A549 (cell line): ENCODE measurements at regions of chr12 and their contacts with region 1.

Region 1: DNA sequence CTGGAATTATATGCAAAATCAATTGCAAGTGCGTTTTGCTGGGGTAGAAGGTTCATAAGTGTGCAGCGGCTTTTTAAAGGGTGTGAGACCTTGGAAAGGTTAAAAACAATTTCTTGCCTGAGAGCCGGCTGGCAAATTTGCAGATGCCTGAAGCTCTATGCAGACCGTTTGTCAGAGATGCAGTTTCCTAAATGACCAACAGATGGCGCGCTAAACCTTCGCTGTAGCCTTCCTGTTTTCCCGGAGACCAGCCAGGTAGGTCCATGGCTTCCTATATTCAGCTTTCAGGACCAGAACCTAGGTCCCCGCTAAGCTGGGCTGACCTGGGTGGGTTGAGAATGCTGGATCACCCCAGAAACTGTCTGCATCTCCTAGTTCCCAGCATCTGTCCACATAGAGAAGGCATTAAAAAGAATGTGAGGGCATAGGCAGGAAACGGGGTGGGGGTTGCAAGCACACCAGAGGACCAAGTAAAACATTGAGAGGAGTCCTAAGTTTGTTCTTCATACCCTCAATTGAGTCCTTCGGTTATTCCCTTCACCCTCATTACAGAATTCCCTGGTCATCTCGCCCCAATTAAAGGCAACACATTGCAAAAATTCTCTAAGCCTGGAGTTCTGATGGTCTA is 5.7 kb upstream of the NOS1 start:
- DNase-seq: peak; percentile 85 to 90
- ATAC-seq: peak; percentile 41 to 86; a peak in 4 of 6 replicates
- H3K4me3 ChIP-seq: no peak overlapping the region
- H3K27ac ChIP-seq: peak overlapping the region; percentile 13 to 36; a peak in 3 of 6 replicates
- H3K4me1 ChIP-seq: 0 out of 3 replicates have a peak, but pooled peaks cover 3% of the 10 kb centered on the region
- CTCF ChIP-seq: peak; percentile 96
- EP300 ChIP-seq: no peak
- POLR2A ChIP-seq: no peak
- RAD21 ChIP-seq: peak; percentile 98 to 99

Region 2: DNA sequence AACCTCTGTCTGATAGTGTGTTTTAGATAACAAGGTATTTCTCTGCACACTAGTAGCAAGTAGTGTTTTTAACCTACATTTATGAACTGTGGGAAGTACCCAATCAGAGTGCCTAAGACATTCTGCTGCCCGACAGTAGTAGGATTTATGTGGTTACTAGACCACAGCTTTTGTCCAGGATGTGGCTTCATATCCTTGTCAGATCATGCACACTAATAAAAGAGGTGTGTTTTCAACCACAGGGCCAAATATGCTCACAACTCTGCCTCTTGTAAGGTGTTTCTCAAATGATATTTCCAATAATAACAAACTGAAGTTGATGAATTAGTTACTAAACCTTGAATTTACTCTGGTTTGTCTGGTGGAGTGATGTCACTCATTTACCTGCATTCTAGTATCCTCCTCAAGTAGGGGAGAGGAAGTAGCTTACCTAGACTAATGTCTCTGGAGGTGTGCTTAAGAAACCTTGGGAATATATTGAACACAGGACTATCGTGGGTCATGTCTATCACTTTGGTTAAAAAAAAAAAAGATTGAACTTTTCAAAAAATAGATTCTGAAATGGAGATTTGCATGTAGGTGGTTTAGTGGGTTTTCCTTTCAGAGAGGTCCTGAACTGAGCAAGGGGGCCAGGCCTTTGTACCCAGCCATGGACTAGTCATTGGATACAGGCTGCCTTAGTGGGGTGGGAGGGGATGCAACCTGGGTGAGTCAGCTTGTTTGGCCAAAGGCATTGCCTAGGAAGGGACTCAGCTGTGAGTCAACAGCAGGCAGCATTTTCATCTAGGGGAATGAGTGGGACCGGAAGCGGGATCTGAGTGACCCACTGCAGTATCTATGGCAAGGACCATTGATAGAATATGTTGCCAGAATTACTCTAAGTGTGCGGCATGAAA is 442.3 kb before region 1 on chr12:
- CTCF ChIA-PET with region 1: no interaction called
- POLR2A ChIA-PET with region 1: no interaction called
- DNase-seq: peak in 1 of 2 experiments; percentile 24
- ATAC-seq: peak; percentile 66 to 75; a peak in 4 of 6 replicates
- H3K4me3 ChIP-seq: no peak overlapping the region
- H3K27ac ChIP-seq: no peak overlapping the region
- H3K4me1 ChIP-seq: peaks cover 12% of the 10 kb centered on the region
- CTCF ChIP-seq: no peak
- EP300 ChIP-seq: no peak
- POLR2A ChIP-seq: no peak
- RAD21 ChIP-seq: no peak

Region 3: GRCh38 chr12:117236456-117237001 is 130.6 kb before region 1 on chr12:
- CTCF ChIA-PET with region 1: interaction called, 19 read pairs
- POLR2A ChIA-PET with region 1: no interaction called
- DNase-seq: peak; percentile 69 to 82
- ATAC-seq: peak; percentile 91 to 95
- H3K4me3 ChIP-seq: no peak overlapping the region
- H3K27ac ChIP-seq: no peak overlapping the region
- H3K4me1 ChIP-seq: no peaks in the 10 kb centered on the region
- CTCF ChIP-seq: peak; percentile 88
- EP300 ChIP-seq: no peak
- POLR2A ChIP-seq: no peak
- RAD21 ChIP-seq: peak; percentile 88 to 89

Region 4: DNA sequence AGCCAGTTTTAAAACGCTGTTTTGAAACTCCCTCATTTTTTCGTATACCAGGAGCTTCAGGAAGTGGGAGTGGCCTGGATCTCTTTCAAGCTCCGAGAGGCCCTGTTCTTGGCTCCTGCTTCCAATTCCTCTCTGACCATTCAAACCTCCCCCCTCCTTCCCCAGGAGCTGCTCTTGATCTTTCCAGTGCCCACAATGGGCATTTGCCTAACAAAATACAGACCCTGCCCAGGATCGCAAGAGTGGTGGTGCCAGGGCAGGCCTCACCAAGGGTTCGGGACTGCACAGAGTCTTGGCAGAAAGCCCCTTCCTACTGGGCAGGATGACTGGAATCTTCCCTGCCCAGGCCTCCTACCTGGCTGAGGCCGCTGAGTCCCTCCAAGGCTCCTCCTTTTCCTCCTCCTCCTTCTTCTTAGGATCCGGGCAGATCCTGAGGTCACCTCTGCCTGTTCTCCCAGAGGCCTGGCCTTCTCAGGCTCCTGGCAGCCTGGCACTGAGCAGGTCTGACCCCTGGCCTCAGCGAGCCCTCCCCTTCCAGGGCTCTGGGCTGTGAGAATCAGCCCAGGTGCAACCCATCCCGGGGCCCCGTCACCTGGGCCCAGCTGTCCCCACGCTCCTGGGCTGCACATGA is 41.2 kb after region 1 on chr12:
- CTCF ChIA-PET with region 1: interaction called, 11 read pairs
- POLR2A ChIA-PET with region 1: no interaction called
- DNase-seq: no peak
- ATAC-seq: peak in 1 of 2 experiments; percentile 56; a peak in 3 of 6 replicates
- H3K4me3 ChIP-seq: no peak overlapping the region
- H3K27ac ChIP-seq: peak overlapping the region; percentile 14 to 48; a peak in 1 of 6 replicates
- H3K4me1 ChIP-seq: peaks cover 7% of the 10 kb centered on the region; the same call in 1 of the 3 replicates
- CTCF ChIP-seq: no peak
- EP300 ChIP-seq: no peak
- POLR2A ChIP-seq: no peak
- RAD21 ChIP-seq: no peak

Region 5: GRCh38 chr12:117587631-117588287 is 220.6 kb after region 1 on chr12:
- CTCF ChIA-PET with region 1: interaction called, 315 read pairs
- POLR2A ChIA-PET with region 1: no interaction called
- DNase-seq: peak; percentile 60 to 77
- ATAC-seq: peak; percentile 75 to 98; a peak in 5 of 6 replicates
- H3K4me3 ChIP-seq: no peak overlapping the region
- H3K27ac ChIP-seq: peak overlapping the region; percentile 44 to 65; a peak in 5 of 6 replicates
- H3K4me1 ChIP-seq: no peaks in the 10 kb centered on the region
- CTCF ChIP-seq: peak; percentile 89
- EP300 ChIP-seq: no peak
- POLR2A ChIP-seq: no peak
- RAD21 ChIP-seq: peak; percentile 92 to 94

Region 6: GRCh38 chr12:117830471-117830870 is 463.3 kb after region 1 on chr12:
- CTCF ChIA-PET with region 1: interaction called, 43 read pairs
- POLR2A ChIA-PET with region 1: no interaction called
- DNase-seq: no peak
- ATAC-seq: no peak
- H3K4me3 ChIP-seq: no peak overlapping the region
- H3K27ac ChIP-seq: no peak overlapping the region
- H3K4me1 ChIP-seq: peaks cover 10% of the 10 kb centered on the region
- CTCF ChIP-seq: no peak
- EP300 ChIP-seq: no peak
- POLR2A ChIP-seq: no peak
- RAD21 ChIP-seq: no peak